CD4-positive, alpha-beta memory T cell (primary cell): ENCODE measurements at regions of chr6 and their contacts with region 1.

Region 1: DNA sequence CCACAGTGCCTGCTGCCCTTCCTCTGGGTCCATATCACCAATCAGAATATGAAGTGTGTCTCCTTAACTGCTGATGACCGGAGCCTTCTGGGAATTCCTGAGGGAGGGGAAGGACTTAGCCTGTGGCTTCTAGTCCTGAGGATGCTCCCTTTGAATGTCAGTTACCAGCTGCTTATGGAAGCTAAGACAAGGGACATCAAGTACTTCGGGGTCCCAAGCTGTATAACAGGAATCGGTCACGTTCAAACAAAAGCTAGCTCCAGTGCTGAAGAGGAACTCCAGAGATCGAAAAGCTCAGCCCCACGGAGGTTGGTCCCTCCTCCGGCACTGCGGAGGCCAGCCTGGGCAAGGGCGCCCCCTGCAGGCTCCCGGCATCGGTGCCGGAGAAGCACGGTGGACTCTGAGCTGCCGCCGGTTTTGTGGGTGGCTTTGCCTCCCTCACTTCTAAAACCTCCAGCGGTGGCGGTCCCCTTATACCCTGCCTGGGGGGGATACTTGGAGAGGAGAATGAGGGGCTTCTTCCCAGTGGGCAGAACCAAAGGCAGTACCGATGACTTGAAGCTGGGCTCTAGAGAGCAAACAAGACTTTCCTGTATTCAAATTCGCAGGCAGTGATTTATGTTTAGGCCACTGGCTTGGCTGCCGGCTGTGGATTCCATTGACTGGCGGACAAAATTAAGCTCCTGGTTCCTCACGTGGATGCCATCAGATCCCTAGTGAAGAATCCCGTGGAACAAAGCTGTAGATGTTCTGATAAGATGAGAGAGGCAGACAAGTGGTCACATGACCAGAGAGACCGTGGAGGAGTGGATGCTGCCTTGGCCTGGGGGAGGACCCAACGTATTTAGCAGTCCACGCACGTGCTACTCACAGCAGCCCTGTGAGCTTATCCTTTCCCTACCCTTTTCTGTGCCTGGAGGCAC is 16.2 kb upstream of the UBR2 start:
- DNase-seq: peak; percentile 73 to 85 (median 82)
- H3K4me3 ChIP-seq: peak overlapping the region in 1 of 2 donors; percentile 18
- H3K4me3 Mint-ChIP-seq: peak overlapping the region; percentile 59 to 76 (median 74)
- H3K27ac ChIP-seq: no peak overlapping the region
- H3K27ac Mint-ChIP-seq: peak overlapping the region in 6 of 7 donors; percentile 41 to 93 (median 56)
- H3K4me1 ChIP-seq: peaks cover 9% of the 10 kb centered on the region
- H3K4me1 Mint-ChIP-seq: peaks cover 5 to 13% (median 9%) of the 10 kb centered on the region in 4 donors
- H3K27me3 ChIP-seq: no peaks in the 10 kb centered on the region
- H3K27me3 Mint-ChIP-seq: peaks cover 2 to 4% of the 10 kb centered on the region in 2 donors

Region 2: DNA sequence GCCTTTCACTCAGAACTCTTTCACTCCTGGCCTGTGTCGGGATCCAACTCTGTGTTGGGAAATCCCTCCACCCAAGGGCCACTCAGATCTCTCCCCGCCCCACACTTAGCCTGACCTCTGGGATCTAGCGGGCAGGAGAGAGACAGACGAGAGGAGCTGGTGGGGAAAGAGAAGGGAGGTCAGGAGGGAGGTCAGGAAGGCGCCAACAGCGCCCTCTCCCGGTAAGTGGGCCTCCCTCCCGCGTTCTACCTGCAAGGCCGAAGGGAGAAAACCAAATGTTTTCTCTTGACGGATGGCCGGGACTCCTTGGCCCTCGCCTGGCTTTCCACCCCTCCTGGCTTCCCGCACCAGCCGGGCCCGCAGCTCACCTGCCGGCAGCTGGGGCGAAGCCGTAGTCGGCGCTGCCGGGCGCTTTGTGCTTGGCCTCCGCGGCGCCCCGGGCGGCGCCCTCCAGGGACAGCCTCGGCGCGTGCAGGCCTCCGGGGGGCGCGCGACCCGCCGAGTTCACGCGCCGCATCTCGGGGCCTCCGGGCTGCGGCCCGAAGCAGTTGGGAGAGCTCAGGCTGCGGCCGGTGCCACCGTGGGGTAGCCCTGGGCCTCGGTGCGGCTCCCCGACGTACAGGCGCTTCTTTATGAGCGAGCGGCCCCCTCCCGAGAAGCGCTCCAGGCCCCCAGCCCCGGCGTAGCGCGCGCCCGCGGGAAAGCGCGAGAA is 443.4 kb before region 1 on chr6:
- CTCF ChIA-PET with region 1: interaction called, 14 read pairs
- POLR2A ChIA-PET with region 1: no interaction called
- intact Hi-C with region 1: no loop called
- DNase-seq: peak; percentile 65 to 77 (median 73)
- H3K4me3 ChIP-seq: peak overlapping the region in 1 of 2 donors; percentile 53
- H3K4me3 Mint-ChIP-seq: peak overlapping the region; percentile 42 to 84 (median 70)
- H3K27ac ChIP-seq: no peak overlapping the region
- H3K27ac Mint-ChIP-seq: peak overlapping the region in 1 of 7 donors; percentile 42
- H3K4me1 ChIP-seq: peaks cover 6% of the 10 kb centered on the region
- H3K4me1 Mint-ChIP-seq: peaks cover 0 to 14% (median 6%) of the 10 kb centered on the region in 4 donors
- H3K27me3 ChIP-seq: no peaks in the 10 kb centered on the region
- H3K27me3 Mint-ChIP-seq: peaks cover 2 to 6% of the 10 kb centered on the region in 2 donors

Region 3: GRCh38 chr6:42243046-42243445 is 304.6 kb before region 1 on chr6:
- CTCF ChIA-PET with region 1: interaction called, 19 read pairs
- POLR2A ChIA-PET with region 1: no interaction called
- intact Hi-C with region 1: no loop called
- DNase-seq: no peak
- H3K4me3 ChIP-seq: no peak overlapping the region
- H3K4me3 Mint-ChIP-seq: no peak overlapping the region
- H3K27ac ChIP-seq: no peak overlapping the region
- H3K27ac Mint-ChIP-seq: peak overlapping the region in 1 of 7 donors; percentile 24
- H3K4me1 ChIP-seq: no peaks in the 10 kb centered on the region
- H3K4me1 Mint-ChIP-seq: peaks cover 0 to 4% (median 2%) of the 10 kb centered on the region in 4 donors
- H3K27me3 ChIP-seq: no peaks in the 10 kb centered on the region
- H3K27me3 Mint-ChIP-seq: no peaks in the 10 kb centered on the region

Region 4: DNA sequence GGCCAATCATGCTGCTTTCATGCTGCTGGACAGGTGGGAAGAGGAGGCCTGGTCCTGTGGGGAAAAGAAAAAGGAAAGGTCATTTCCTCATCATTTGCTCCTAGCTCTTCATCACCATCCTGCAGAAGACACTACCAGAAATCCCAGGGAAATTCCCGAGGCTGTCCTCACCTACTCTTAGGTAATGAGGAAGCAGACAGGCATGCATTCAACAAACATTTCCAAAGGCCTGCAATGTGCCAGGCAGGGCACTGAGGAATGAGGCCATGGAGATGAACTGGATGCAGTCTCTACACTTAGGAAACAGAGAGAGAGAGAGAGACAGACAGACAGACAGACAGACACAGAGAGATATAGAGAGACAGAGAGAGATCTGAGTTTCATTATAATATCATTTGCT is 247.0 kb before region 1 on chr6:
- CTCF ChIA-PET with region 1: interaction called, 22 read pairs
- POLR2A ChIA-PET with region 1: no interaction called
- intact Hi-C with region 1: no loop called
- DNase-seq: no peak
- H3K4me3 ChIP-seq: no peak overlapping the region
- H3K4me3 Mint-ChIP-seq: no peak overlapping the region
- H3K27ac ChIP-seq: no peak overlapping the region
- H3K27ac Mint-ChIP-seq: peak overlapping the region in 5 of 7 donors; percentile 1 to 76 (median 35)
- H3K4me1 ChIP-seq: peaks cover 35% of the 10 kb centered on the region
- H3K4me1 Mint-ChIP-seq: peaks cover 32 to 57% (median 39%) of the 10 kb centered on the region in 4 donors
- H3K27me3 ChIP-seq: no peaks in the 10 kb centered on the region
- H3K27me3 Mint-ChIP-seq: no peaks in the 10 kb centered on the region

Region 5: DNA sequence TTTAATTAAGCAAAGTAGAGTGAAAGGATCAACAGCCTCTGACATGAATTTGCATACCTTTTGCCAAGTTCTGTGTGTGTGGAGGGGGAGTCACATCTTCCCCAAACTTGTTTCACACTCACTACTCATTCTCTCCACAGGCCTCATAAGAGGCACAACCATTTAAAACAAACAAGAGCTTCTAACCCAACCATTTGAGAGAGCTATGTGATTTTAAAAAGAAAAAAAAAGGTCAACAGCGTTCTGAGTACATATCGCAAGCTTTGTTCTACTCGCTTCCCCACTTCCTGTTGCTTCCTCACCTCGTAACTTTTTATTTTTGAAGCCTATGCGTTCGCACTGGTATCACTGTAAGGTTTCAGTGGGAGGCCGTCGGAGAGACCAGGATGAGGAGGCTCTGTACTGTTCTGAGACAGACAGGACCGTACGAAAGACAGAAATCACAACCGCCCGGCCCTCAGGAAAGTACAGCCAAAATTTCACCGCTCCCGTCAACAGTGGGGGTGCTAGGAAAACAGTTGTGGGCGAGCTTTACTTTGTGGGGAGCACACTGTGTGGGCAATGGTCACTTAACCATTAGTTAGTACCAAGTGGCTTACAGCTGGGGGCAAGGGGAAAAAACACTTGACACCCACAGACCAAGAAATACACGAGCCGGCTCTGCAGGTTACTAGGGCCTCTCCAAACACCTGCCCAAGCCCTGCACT is 157.3 kb before region 1 on chr6:
- CTCF ChIA-PET with region 1: interaction called, 17 read pairs
- POLR2A ChIA-PET with region 1: no interaction called
- intact Hi-C with region 1: no loop called
- DNase-seq: peak; percentile 73 to 79 (median 77)
- H3K4me3 ChIP-seq: peak overlapping the region; percentile 1 to 42
- H3K4me3 Mint-ChIP-seq: peak overlapping the region; percentile 73 to 85 (median 82)
- H3K27ac ChIP-seq: peak overlapping the region; percentile 79
- H3K27ac Mint-ChIP-seq: peak overlapping the region; percentile 96 to 99 (median 98)
- H3K4me1 ChIP-seq: peaks cover 100% of the 10 kb centered on the region
- H3K4me1 Mint-ChIP-seq: peaks cover 76 to 100% (median 90%) of the 10 kb centered on the region in 4 donors
- H3K27me3 ChIP-seq: no peaks in the 10 kb centered on the region
- H3K27me3 Mint-ChIP-seq: no peaks in the 10 kb centered on the region

Region 6: GRCh38 chr6:42509765-42510164 is 37.9 kb before region 1 on chr6:
- CTCF ChIA-PET with region 1: interaction called, 14 read pairs
- POLR2A ChIA-PET with region 1: no interaction called
- intact Hi-C with region 1: no loop called
- DNase-seq: no peak
- H3K4me3 ChIP-seq: no peak overlapping the region
- H3K4me3 Mint-ChIP-seq: no peak overlapping the region
- H3K27ac ChIP-seq: no peak overlapping the region
- H3K27ac Mint-ChIP-seq: no peak overlapping the region
- H3K4me1 ChIP-seq: no peaks in the 10 kb centered on the region
- H3K4me1 Mint-ChIP-seq: no peaks in the 10 kb centered on the region
- H3K27me3 ChIP-seq: no peaks in the 10 kb centered on the region
- H3K27me3 Mint-ChIP-seq: peaks cover 0 to 2% of the 10 kb centered on the region in 2 donors